Activated CD4-positive, alpha-beta T cell treated with anti-CD3 and anti-CD28 coated beads for 36 hours (primary cell): ENCODE measurements at regions of chr1 and their contacts with region 1.

Region 1: DNA sequence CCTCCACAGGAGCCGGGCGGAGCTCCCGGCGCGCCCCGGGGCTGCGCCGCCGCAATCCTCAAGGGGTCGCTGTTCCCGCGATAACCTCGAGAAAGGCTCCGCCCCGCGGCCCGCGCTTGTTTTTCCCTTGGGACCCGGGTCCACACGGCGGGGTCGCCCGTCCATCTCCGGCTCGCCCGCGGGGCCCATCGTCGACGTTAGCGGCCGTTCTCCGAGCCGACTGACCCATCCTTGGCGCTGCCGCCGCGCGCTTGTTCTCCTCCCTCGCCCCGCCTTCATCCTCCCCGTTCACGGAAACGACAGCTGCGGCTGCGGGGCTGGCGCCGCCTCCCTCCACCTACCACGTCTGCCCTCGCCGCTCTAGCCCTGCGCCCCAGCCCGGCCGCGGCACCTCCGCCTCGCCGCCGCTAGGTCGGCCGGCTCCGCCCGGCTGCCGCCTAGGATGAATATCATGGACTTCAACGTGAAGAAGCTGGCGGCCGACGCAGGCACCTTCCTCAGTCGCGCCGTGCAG is at the start of gene SH3GLB1:
- DNase-seq: peak; percentile 93
- ATAC-seq: peak; percentile 90
- H3K4me3 Mint-ChIP-seq: peak within 1 kb of the TSS; percentile 98
- H3K27ac Mint-ChIP-seq: peak within 1 kb of the TSS; percentile 98
- H3K4me1 Mint-ChIP-seq: peaks cover 44% of the 10 kb centered on the region
- H3K27me3 Mint-ChIP-seq: no peaks in the 10 kb centered on the region
- total RNA-seq, gene SH3GLB1: 58.0 to 64.5 TPM

Region 2: DNA sequence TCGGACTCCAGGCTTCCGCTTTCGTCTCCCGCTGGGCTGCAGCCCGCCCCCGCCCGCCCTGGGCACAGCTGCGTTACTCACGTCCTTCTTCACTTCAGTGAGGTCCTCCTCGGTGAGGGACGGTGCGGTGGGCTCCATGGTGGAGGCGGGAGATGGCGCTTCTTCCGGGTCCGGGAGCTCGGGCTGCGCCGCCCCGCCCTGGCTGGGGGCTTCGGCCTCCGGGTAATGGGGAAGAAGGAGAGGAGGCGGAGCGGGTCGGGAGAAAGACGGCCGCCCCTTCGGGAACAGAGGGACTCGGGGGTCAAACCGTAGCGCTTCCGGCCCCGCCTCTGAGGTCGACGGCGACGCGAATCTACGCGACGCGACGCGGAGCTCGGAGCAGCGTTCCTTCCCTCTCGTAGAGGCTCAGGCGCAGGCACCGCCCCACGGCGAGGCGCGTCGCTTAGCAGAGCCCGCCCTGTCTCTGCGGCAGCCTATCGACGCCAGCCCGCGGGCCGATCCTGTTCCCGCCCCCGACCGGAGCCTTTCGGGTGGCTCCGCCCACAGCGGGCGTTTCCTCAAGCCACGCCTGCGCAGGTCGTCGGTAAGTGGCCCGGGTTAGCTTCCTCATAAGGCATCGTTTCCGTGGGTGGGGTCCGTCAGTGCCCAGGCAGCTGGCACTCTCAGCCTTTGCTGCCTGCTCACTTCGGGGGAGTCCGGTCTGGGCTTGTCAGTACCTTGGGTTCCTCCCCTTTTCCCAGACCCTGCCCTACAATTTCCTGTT is 1428.1 kb before region 1 on chr1 and contains the start of gene BCL10:
- CTCF ChIA-PET with region 1: no interaction called
- POLR2A ChIA-PET with region 1: no interaction called
- intact Hi-C with region 1: loop called in 1 of 2 experiments (anchors 10 kb)
- DNase-seq: peak; percentile 99
- ATAC-seq: peak; percentile 97
- H3K4me3 Mint-ChIP-seq: peak within 1 kb of the TSS; percentile 84
- H3K27ac Mint-ChIP-seq: peak within 1 kb of the TSS; percentile 94
- H3K4me1 Mint-ChIP-seq: peaks cover 52% of the 10 kb centered on the region
- H3K27me3 Mint-ChIP-seq: peaks cover 4% of the 10 kb centered on the region
- total RNA-seq, gene BCL10: 28.3 to 28.8 TPM

Region 3: GRCh38 chr1:86499987-86500593 is 204.4 kb before region 1 on chr1:
- CTCF ChIA-PET with region 1: interaction called, 13 read pairs
- POLR2A ChIA-PET with region 1: no interaction called
- intact Hi-C with region 1: loop called in 1 of 2 experiments (anchors 1 kb)
- DNase-seq: no peak
- ATAC-seq: peak; percentile 37
- H3K4me3 Mint-ChIP-seq: no peak overlapping the region
- H3K27ac Mint-ChIP-seq: no peak overlapping the region
- H3K4me1 Mint-ChIP-seq: peaks cover 5% of the 10 kb centered on the region
- H3K27me3 Mint-ChIP-seq: peaks cover 8% of the 10 kb centered on the region

Region 4: GRCh38 chr1:86753700-86754099 is 49.2 kb after region 1 on chr1:
- CTCF ChIA-PET with region 1: interaction called, 11 read pairs
- POLR2A ChIA-PET with region 1: no interaction called
- intact Hi-C with region 1: no loop called
- DNase-seq: peak; percentile 35
- ATAC-seq: peak; percentile 72
- H3K4me3 Mint-ChIP-seq: no peak overlapping the region
- H3K27ac Mint-ChIP-seq: no peak overlapping the region
- H3K4me1 Mint-ChIP-seq: peaks cover 7% of the 10 kb centered on the region
- H3K27me3 Mint-ChIP-seq: peaks cover 2% of the 10 kb centered on the region

Region 5: GRCh38 chr1:86866665-86867064 is 162.2 kb after region 1 on chr1:
- CTCF ChIA-PET with region 1: no interaction called
- POLR2A ChIA-PET with region 1: no interaction called
- intact Hi-C with region 1: no loop called
- DNase-seq: no peak
- ATAC-seq: no peak
- H3K4me3 Mint-ChIP-seq: no peak overlapping the region
- H3K27ac Mint-ChIP-seq: no peak overlapping the region
- H3K4me1 Mint-ChIP-seq: peaks cover 17% of the 10 kb centered on the region
- H3K27me3 Mint-ChIP-seq: no peaks in the 10 kb centered on the region

Region 6: GRCh38 chr1:87045761-87046304 is 341.3 kb after region 1 on chr1:
- CTCF ChIA-PET with region 1: no interaction called
- POLR2A ChIA-PET with region 1: no interaction called
- intact Hi-C with region 1: loop called in 1 of 2 experiments (anchors 10 kb)
- DNase-seq: peak; percentile 80
- ATAC-seq: peak; percentile 81
- H3K4me3 Mint-ChIP-seq: peak overlapping the region; percentile 57
- H3K27ac Mint-ChIP-seq: peak overlapping the region; percentile 94
- H3K4me1 Mint-ChIP-seq: peaks cover 58% of the 10 kb centered on the region
- H3K27me3 Mint-ChIP-seq: no peaks in the 10 kb centered on the region

Region 7: GRCh38 chr1:87418048-87418447 is 713.5 kb after region 1 on chr1:
- CTCF ChIA-PET with region 1: no interaction called
- POLR2A ChIA-PET with region 1: no interaction called
- intact Hi-C with region 1: no loop called
- DNase-seq: no peak
- ATAC-seq: no peak
- H3K4me3 Mint-ChIP-seq: no peak overlapping the region
- H3K27ac Mint-ChIP-seq: no peak overlapping the region
- H3K4me1 Mint-ChIP-seq: no peaks in the 10 kb centered on the region
- H3K27me3 Mint-ChIP-seq: no peaks in the 10 kb centered on the region

Region 8: DNA sequence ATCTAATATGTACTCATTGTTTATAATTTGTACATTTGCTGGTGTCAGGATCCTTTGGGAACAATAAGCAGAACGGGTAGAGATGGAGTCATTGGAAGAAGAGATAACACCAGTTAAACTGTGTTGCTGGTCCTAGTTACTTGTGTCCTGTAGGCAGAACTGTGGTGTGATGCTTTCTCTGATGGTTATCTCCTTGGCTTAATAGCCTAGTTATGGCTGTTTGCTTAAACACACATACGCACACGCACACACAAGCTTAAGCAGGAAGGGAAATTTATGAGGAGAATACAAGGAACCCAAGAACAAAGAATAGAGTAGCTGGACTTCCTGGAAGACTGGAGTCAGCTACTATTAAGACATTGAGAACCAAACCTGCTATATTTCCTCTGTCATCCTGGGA is 1973.9 kb after region 1 on chr1:
- CTCF ChIA-PET with region 1: no interaction called
- POLR2A ChIA-PET with region 1: no interaction called
- intact Hi-C with region 1: loop called in 1 of 2 experiments (anchors 10 kb)
- DNase-seq: no peak
- ATAC-seq: no peak
- H3K4me3 Mint-ChIP-seq: no peak overlapping the region
- H3K27ac Mint-ChIP-seq: no peak overlapping the region
- H3K4me1 Mint-ChIP-seq: peaks cover 7% of the 10 kb centered on the region
- H3K27me3 Mint-ChIP-seq: no peaks in the 10 kb centered on the region